ENCODE measurements at regions of chr19 and their contacts with region 1.

Region 1: DNA sequence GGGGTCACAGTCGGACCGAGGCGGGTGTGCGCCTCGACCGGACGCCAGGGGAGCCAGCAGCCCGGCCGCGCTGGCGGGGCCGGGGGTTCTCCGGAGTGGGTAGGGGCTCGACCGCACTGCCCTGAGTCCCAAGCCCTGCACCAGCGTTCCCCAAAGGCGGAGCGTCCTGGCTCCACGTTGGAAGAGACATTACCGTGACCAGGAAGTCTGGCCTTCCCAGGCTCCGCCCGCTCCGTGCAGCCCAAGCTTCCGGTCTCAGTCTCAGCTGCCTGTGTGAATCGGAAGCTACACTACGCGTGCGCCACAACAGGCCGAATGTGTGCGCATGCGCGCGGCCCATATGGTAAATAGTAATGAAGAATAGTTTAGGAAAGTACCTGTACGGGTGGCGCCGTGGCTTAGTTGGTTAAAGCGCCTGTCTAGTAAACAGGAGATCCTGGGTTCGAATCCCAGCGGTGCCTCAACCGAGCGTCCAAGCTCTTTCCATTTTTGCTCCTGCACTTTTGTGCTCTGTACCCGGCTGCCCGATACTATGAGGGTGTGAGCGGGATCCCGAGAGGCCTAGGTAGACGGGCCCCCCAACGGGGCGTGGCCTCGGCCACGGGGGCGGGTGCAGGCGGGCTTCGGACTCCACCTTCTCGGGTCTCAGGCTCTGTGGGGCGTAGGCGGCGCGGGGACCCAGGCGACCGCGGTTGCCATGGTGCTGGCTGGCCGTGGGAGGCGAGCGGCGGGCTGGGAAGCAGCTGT is 17.3 kb upstream of the LRP3 start:
- DNase-seq: peak; percentile 97
- H3K4me3 ChIP-seq: peak overlapping the region; percentile 77 to 86 (median 80)
- H3K27ac ChIP-seq: peak overlapping the region; percentile 91 to 96 (median 94)
- H3K4me1 ChIP-seq: peaks cover 0 to 30% (median 25%) of the 10 kb centered on the region in 4 donors
- H3K27me3 ChIP-seq: no peaks in the 10 kb centered on the region
- CTCF ChIP-seq: peak in 1 of 4 experiments; percentile 49
- EP300 ChIP-seq: peak in 1 of 4 donors; percentile 10
- POLR2A ChIP-seq: peak; percentile 74 to 77

Region 2: GRCh38 chr19:32674959-32675719 is 501.7 kb before region 1 on chr19 and contains the start of gene ANKRD27:
- intact Hi-C with region 1: loop called (anchors 10 kb)
- DNase-seq: peak; percentile 99
- H3K4me3 ChIP-seq: peak within 1 kb of the TSS; percentile 74 to 99 (median 85)
- H3K27ac ChIP-seq: peak within 1 kb of the TSS; percentile 87 to 93 (median 88)
- H3K4me1 ChIP-seq: peaks cover 0 to 40% (median 34%) of the 10 kb centered on the region in 4 donors
- H3K27me3 ChIP-seq: peaks cover 0 to 23% (median 12%) of the 10 kb centered on the region in 3 donors
- CTCF ChIP-seq: no peak
- EP300 ChIP-seq: peak in 1 of 4 donors; percentile 6
- POLR2A ChIP-seq: peak; percentile 30 to 45
- total RNA-seq, gene ANKRD27: 34.1 to 48.5 (median 40.4) TPM

Region 3: DNA sequence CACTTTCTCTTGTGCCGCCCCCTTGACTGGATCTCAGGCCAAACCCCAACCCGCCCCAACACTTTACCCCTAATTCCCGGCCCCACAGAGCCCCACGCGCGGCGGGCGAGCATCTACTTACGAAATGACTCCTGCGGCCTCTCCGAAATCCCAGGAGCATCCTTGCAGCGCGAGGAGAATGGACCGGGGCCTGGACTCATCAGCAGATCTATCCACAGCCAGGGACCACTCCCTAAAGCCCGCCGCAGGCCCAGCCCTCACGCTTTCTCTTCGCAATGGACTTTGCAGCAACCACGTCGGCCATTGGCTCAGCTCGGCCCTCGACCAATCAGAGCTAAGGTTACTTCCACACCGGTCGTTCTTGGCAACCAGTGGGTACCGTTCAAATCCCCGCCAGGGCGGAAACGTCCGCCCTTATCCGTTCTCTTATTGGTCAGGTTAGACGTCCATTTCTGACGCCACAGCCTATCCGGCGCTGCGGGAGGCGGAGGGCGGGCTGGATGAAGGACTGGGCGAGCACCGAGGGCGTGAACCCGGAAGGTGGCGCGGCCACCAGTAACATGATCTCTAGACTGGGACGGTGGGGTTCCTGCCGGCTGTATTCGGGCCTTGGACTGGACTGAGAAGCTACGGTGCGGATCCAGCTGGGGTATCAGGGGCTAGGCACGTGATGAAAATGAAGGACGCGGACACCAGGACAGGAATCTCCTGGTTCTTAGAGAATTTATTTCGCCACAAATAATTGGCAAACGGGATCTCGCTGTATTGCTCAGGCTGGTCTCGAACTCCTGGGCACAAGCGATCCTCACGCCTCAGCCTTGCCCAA is 204.9 kb before region 1 on chr19 and contains the starts of genes CEP89 and FAAP24:
- intact Hi-C with region 1: loop called (anchors 2 kb)
- DNase-seq: peak; percentile 99
- H3K4me3 ChIP-seq: peak within 1 kb of the TSS; percentile 61 to 99 (median 84)
- H3K27ac ChIP-seq: peak within 1 kb of the TSS; percentile 74 to 83 (median 78)
- H3K4me1 ChIP-seq: peaks cover 0 to 23% (median 20%) of the 10 kb centered on the region in 4 donors
- H3K27me3 ChIP-seq: no peaks in the 10 kb centered on the region
- CTCF ChIP-seq: no peak
- EP300 ChIP-seq: no peak
- POLR2A ChIP-seq: no peak
- total RNA-seq, gene CEP89: 11.1 to 17.5 (median 16.7) TPM
- total RNA-seq, gene FAAP24: 0.14 to 2.3 (median 1.8) TPM

Region 4: GRCh38 chr19:33143897-33144405 is 32.9 kb before region 1 on chr19:
- intact Hi-C with region 1: loop called (anchors 2 kb)
- DNase-seq: peak; percentile 84
- H3K4me3 ChIP-seq: no peak overlapping the region
- H3K27ac ChIP-seq: no peak overlapping the region
- H3K4me1 ChIP-seq: peaks cover 0 to 4% (median 0%) of the 10 kb centered on the region in 4 donors
- H3K27me3 ChIP-seq: peaks cover 0 to 9% (median 0%) of the 10 kb centered on the region in 3 donors
- CTCF ChIP-seq: peak; percentile 89 to 95 (median 94)
- EP300 ChIP-seq: no peak
- POLR2A ChIP-seq: no peak

Region 5: DNA sequence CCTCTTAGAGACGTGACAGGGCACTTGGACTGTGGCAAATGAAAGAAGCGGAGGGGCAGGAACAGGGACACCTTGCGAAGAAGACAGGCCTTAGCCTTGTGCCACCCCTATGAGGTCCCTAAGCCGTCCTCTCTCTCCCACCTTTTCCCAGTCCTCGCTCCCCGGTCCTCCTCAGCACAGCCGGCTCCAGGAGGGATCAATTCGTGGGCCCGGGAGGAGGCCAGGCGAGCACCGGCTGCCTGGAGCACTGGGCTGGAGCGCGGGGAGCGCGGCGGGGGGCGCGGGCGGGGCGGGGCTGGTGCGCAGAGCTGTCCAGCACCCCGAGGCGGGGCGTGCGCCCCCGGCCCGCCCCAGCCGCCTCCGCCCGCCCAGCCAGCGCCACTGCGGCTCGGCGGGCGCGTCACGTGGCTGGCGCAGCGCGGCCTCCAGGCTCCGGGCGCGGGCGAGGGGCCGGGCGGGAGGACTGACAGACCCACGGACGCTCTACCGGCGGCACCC is 17.1 kb after region 1 on chr19 and contains the start of gene LRP3:
- intact Hi-C with region 1: loop called (anchors 1 kb)
- DNase-seq: no peak
- H3K4me3 ChIP-seq: peak within 1 kb of the TSS; percentile 49 to 86 (median 78)
- H3K27ac ChIP-seq: peak within 1 kb of the TSS; percentile 69 to 76 (median 75)
- H3K4me1 ChIP-seq: peaks cover 0 to 20% (median 13%) of the 10 kb centered on the region in 4 donors
- H3K27me3 ChIP-seq: no peaks in the 10 kb centered on the region
- CTCF ChIP-seq: no peak
- EP300 ChIP-seq: no peak
- POLR2A ChIP-seq: no peak
- total RNA-seq, gene LRP3: 17.1 to 31.5 (median 21.8) TPM

Region 6: DNA sequence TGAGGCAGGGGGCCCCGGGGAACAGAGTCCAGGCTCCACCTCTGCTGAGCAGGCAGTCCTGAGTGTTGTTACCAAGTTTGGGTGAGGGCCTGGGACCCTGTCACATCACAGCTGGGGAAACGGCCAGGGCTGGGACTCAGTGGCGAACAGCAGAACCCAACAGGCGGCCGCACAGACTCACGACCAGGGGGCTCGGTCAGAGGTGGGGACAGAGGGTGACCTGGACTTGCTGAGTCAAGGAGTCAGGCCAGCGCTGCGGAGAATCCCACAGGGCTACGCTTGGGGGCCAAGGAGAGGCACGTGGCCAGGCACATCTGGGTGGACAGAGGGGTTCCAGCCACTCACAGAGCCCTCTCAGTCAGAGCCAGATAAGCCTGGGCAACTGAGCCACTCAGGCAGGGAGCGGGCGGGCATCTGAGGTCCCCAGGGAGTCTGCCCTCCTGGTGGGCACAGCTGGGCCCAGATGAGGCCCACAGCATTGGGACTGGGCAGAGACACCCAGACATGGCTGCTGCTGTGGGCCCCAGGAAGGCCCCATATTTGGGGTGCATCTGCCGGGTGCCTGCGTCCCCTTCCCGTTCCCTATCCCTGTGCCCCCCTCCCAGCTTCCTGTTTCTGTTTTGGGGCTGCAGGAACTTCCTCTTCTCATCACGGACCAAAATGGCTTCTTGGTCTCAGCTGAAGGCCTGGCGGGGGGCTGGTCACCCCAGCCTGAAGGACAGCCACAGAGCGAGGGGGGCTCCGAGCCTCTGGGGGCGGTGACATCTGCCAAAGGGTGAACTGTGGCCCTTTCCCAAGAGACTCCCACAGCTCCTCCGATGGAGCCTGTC is 91.5 kb after region 1 on chr19:
- intact Hi-C with region 1: no loop called
- DNase-seq: no peak
- H3K4me3 ChIP-seq: no peak overlapping the region
- H3K27ac ChIP-seq: no peak overlapping the region
- H3K4me1 ChIP-seq: no peaks in the 10 kb centered on the region
- H3K27me3 ChIP-seq: no peaks in the 10 kb centered on the region
- CTCF ChIP-seq: no peak
- EP300 ChIP-seq: no peak
- POLR2A ChIP-seq: no peak